Right cardiac atrium (tissue), 5 donors: ENCODE measurements at regions of chr6 and their contacts with region 1.

Region 1: DNA sequence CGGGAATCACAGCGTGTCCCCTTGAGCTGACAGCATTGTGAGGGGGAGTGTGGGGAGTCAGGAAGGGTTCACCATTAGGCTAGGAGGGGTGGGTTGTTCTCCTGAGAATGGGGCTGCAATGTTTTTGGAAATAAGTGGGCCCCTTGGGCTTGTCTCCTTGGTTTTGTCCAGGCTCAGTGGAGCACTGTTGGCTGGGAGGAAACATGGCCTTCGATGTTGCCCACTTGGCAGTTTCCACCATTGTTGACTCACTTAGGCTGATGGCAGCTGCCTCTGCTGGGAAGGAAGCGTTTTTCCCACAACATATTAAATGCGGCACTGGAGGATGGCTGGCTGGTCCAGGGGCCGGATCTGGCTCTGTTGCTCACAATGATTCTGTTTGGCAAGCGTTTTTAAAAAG is 512.1 kb downstream of the QKI start:
- DNase-seq: peak; percentile 64 to 82 (median 79)
- ATAC-seq: peak; percentile 85 to 93
- H3K4me3 ChIP-seq: no peak overlapping the region
- H3K27ac ChIP-seq: peak overlapping the region; percentile 17
- H3K4me1 ChIP-seq: no peaks in the 10 kb centered on the region
- H3K27me3 ChIP-seq: no peaks in the 10 kb centered on the region

Region 2: GRCh38 chr6:163860287-163861081 is 66.2 kb before region 1 on chr6:
- intact Hi-C with region 1: loop called in 1 of 4 experiments (anchors 10 kb)
- DNase-seq: peak in 2 of 3 donors; percentile 40 to 74
- ATAC-seq: peak; percentile 75 to 81
- H3K4me3 ChIP-seq: peak overlapping the region; percentile 26
- H3K27ac ChIP-seq: no peak overlapping the region
- H3K4me1 ChIP-seq: peaks cover 4% of the 10 kb centered on the region
- H3K27me3 ChIP-seq: no peaks in the 10 kb centered on the region

Region 3: GRCh38 chr6:164023535-164023934 is 96.9 kb after region 1 on chr6:
- intact Hi-C with region 1: no loop called
- DNase-seq: no peak
- ATAC-seq: no peak
- H3K4me3 ChIP-seq: no peak overlapping the region
- H3K27ac ChIP-seq: no peak overlapping the region
- H3K4me1 ChIP-seq: no peaks in the 10 kb centered on the region
- H3K27me3 ChIP-seq: no peaks in the 10 kb centered on the region